ENCODE measurements at regions of chr18 and their contacts with region 1.

Region 1: DNA sequence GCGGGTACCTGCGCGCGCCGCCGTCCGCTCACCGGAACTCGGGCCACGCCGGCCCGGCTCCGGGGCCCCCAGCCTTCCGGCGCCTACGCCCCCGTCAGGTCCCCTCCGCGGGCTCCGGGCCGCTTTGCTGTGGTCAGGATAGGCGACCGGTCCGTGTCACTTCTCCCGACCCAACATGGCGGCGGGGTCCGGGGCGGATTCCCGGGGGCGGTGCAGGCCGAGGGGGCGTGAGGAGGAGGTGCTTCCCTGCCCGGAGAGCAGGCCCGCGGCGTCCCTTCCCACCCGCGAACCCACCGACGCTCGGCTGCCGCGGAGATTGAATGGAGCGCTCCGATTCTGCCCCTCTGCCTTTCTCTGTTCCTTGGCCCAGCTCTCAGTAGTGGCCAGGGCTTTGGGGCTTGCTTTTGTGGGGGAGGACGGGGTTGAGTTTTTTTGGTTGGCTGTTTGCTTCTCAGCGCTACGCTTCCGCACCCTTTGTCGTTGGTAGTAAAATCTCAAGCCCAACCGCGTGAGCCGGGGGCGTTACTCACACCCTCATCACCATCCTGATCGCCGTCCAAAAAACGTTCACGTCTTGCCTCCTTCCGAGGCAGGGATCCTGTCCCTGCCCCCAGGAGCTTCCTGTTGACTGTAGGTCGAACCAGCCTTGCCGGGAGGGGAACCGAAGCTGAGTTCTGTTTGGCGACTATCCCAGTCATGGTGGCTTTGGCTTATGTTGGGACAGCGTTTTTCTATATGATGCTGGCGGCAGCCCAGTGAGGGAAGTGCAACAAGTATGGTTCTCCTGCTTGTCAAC is 532 bp upstream of the YES1 start:
- DNase-seq: peak; percentile 78
- ATAC-seq: peak; percentile 92
- H3K4me3 ChIP-seq: peak overlapping the region; percentile 69 to 99 (median 99)
- H3K27ac ChIP-seq: peak overlapping the region; percentile 89
- H3K4me1 ChIP-seq: peaks cover 48% of the 10 kb centered on the region
- H3K27me3 ChIP-seq: no peaks in the 10 kb centered on the region; a peak in 1 of 5 replicates
- CTCF ChIP-seq: no peak
- EP300 ChIP-seq: peak; percentile 17 to 29; a peak in 2 of 4 replicates
- POLR2A ChIP-seq: peak; percentile 69 to 74
- RAD21 ChIP-seq: 0 out of 2 replicates have a peak, but pooled peaks have one; percentile 6

Region 2: DNA sequence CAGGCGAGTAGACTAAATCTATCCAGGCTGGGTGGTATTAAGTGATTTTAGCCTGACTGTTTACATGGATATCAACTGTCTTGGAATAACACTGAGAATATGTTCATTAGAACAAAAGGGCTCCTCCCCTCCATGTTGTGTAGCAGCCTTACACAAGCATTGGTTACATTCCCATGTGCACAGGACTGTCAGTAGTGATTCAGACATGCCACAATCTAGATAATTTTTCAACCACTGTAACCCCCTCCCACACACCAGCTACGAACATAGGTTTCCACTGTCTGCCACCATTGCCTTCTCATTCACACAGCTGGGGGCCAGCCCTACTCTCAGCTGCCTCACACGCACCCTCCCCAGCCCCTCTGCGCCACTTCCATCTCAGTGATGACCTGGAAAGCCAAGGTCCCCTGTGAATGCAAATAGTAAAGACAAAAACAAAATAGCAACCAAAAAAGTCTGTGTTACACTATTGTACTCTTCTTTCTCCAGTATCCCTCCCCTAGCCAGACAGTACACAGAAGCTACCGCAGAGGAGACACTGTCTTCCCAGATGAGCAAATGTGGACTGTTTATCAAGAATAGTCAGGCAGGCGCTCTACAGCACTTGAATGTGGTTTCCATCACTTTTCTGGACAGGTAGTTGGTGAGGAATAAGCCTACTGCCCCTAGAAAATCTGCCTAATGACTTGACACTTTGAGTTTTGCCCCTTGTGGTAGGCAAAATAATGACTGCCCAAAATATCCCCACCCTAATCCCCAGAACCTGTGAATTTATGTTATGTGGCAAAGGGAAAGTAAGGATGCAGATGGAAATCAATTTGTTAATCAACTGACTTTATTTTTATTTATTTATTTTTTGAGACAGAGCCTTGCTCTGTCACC is 183.1 kb before region 1 on chr18:
- CTCF ChIA-PET with region 1: no interaction called
- POLR2A ChIA-PET with region 1: no interaction called
- in situ Hi-C with region 1: no loop called
- intact Hi-C with region 1: no loop called
- DNase-seq: no peak
- ATAC-seq: peak; percentile 59; the same call in 2 of the 3 replicates
- H3K4me3 ChIP-seq: no peak overlapping the region
- H3K27ac ChIP-seq: no peak overlapping the region
- H3K4me1 ChIP-seq: peaks cover 3% of the 10 kb centered on the region; the same call in 1 of the 2 replicates
- H3K27me3 ChIP-seq: no peaks in the 10 kb centered on the region
- CTCF ChIP-seq: no peak
- EP300 ChIP-seq: no peak
- POLR2A ChIP-seq: no peak
- RAD21 ChIP-seq: no peak

Region 3: GRCh38 chr18:770575-770960 is 42.0 kb before region 1 on chr18:
- CTCF ChIA-PET with region 1: no interaction called
- POLR2A ChIA-PET with region 1: interaction called, 4 read pairs
- in situ Hi-C with region 1: no loop called
- intact Hi-C with region 1: loop called (anchors 2 kb)
- DNase-seq: peak; percentile 88
- ATAC-seq: peak; percentile 84
- H3K4me3 ChIP-seq: peak overlapping the region in 2 of 3 experiments; percentile 1 to 4; a peak in 3 of 6 replicates
- H3K27ac ChIP-seq: peak overlapping the region; percentile 75
- H3K4me1 ChIP-seq: peaks cover 79% of the 10 kb centered on the region
- H3K27me3 ChIP-seq: no peaks in the 10 kb centered on the region
- CTCF ChIP-seq: no peak
- EP300 ChIP-seq: peak in 1 of 2 experiments; percentile 84; a peak in 3 of 4 replicates
- POLR2A ChIP-seq: no peak
- RAD21 ChIP-seq: no peak